ENCODE measurements at regions of chr15 and their contacts with region 1.

Region 1: GRCh38 chr15:73991726-73992593 is at the start of gene STOML1:
- DNase-seq: peak; percentile 94
- ATAC-seq: peak; percentile 79
- H3K4me3 Mint-ChIP-seq: peak within 1 kb of the TSS; percentile 81
- H3K27ac Mint-ChIP-seq: peak within 1 kb of the TSS; percentile 72
- H3K4me1 Mint-ChIP-seq: peaks cover 52% of the 10 kb centered on the region
- H3K27me3 Mint-ChIP-seq: no peaks in the 10 kb centered on the region
- total RNA-seq, gene STOML1: 10.8 to 10.9 TPM

Region 2: GRCh38 chr15:73882774-73883419 is 109.1 kb before region 1 on chr15:
- CTCF ChIA-PET with region 1: no interaction called
- POLR2A ChIA-PET with region 1: no interaction called
- DNase-seq: no peak
- ATAC-seq: no peak
- H3K4me3 Mint-ChIP-seq: no peak overlapping the region
- H3K27ac Mint-ChIP-seq: no peak overlapping the region
- H3K4me1 Mint-ChIP-seq: no peaks in the 10 kb centered on the region
- H3K27me3 Mint-ChIP-seq: peaks cover 16% of the 10 kb centered on the region

Region 3: DNA sequence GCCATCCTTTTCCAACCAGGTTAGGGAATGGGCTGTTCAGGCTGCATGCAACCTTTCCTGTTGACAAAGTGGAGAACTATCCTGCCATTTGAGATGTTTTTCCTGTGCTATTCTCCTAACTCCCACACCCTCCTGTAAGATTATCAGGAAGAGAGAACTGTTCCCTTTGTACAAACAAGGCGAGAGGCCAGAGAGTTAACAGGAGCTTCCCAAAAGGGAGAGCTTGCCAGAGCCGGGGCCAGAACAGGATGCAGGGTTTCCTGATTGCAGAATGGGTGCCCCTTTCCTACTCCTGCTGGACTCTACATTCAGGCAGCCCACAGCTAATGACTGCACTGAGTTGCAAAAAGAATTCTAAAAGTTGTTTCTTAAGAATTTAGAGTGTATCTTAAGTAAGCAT is 19.6 kb after region 1 on chr15:
- CTCF ChIA-PET with region 1: interaction called, 8 read pairs
- POLR2A ChIA-PET with region 1: interaction called, 37 read pairs
- DNase-seq: no peak
- ATAC-seq: no peak
- H3K4me3 Mint-ChIP-seq: no peak overlapping the region
- H3K27ac Mint-ChIP-seq: peak overlapping the region; percentile 37
- H3K4me1 Mint-ChIP-seq: peaks cover 50% of the 10 kb centered on the region
- H3K27me3 Mint-ChIP-seq: no peaks in the 10 kb centered on the region

Measured in activated CD8-positive, alpha-beta T cell treated with anti-CD3 and anti-CD28 coated beads, Interleukin-2, amount 10 ng/mL, durations not matched to agents 7 days and 5 days (primary cell).